Right ventricle myocardium inferior (tissue), 1 donor: ENCODE measurements at regions of chr3 and their contacts with region 1.

Region 1: DNA sequence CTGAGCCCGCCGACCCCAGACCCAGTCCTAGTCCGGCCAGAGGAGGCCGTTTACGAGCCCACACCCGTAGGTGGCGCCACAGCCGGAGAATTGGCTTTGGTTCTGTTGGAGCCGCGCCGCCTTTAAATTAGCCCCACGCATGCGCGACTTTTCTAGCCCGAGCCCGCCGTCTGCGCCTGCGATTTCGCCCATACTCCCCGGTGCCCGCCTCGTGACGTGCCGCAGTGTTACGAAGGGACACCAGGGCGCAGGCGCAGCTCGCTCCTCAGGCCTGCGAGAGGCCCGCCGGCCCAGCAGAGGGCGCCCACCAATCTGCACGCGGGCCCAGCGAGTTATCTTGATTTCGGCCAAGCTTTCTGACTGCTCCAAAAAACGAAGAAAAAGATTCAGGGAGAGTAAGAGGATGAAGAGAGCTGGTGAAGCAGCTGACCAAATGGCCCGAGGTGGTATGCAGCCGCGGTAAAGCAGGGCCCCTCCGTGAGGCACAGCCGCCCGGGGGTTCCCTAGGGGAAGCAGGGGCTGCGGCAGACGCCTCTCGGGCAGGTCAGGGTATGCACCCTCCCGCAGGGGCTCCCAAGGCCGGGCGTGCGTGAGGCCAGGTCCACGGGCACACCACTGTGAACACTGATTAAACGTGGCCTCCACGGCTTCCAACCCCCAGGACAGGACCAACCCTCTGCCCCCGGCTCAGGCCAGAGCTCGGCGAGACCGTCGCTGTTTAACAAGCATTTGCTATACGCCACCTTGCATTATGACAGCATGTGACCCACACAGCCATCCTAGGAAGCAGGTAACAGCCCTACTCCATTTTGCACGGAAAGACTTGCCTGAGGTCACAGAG is 32.8 kb downstream of the RPN1 start:
- DNase-seq: peak; percentile 100
- ATAC-seq: peak; percentile 98

Region 2: DNA sequence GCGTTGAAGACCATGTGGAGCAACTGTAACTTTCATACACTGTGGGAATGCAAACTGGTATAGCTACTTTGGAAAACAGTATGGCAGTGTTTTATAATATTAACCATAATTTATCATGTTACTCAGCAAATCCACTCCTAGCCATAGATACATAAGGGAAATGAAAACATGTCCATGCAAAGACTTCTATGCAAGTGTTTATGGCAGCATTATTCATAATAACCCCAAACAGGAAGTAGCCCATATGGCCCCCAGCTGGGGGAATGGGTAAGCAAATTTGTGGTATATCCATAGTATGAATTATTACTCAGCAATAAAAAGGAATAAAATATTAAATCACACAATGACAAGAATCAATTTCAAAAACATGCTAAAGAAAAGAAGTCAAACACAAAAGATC is 101.8 kb before region 1 on chr3:
- intact Hi-C with region 1: no loop called
- DNase-seq: no peak
- ATAC-seq: no peak

Region 3: DNA sequence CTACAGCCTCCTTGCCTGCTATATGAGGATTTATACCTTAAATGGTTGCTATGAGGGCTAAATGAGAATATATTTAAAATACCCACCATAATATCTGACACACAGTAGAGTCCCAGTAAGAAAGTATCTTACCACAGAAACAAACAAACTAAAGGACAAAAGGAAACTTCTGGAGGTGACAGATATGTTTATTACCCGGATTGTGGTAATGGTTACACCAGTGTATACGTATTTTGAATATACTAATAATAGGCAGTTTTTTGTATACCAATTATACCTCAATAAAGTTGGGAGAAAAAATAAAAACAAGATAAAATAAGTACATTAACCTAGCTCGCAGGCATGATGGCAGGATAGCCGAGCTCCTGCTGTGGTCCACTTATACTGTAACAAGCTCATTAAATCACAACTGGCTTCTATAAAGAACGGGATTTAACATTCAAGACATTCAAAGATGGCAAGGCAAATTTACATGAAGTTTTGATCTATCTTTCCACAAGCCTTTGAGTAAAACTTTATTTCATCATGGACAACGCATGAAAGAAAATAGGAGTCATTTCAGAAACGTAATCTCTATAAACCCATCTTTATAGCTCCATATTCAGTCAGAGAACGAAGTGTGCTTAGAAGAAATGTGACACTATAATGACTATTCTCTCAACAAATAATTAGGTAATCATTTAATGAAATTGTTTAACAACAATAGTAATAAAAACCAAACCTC is 31.3 kb after region 1 on chr3:
- intact Hi-C with region 1: loop called (anchors 2 kb)
- DNase-seq: no peak
- ATAC-seq: no peak

Region 4: DNA sequence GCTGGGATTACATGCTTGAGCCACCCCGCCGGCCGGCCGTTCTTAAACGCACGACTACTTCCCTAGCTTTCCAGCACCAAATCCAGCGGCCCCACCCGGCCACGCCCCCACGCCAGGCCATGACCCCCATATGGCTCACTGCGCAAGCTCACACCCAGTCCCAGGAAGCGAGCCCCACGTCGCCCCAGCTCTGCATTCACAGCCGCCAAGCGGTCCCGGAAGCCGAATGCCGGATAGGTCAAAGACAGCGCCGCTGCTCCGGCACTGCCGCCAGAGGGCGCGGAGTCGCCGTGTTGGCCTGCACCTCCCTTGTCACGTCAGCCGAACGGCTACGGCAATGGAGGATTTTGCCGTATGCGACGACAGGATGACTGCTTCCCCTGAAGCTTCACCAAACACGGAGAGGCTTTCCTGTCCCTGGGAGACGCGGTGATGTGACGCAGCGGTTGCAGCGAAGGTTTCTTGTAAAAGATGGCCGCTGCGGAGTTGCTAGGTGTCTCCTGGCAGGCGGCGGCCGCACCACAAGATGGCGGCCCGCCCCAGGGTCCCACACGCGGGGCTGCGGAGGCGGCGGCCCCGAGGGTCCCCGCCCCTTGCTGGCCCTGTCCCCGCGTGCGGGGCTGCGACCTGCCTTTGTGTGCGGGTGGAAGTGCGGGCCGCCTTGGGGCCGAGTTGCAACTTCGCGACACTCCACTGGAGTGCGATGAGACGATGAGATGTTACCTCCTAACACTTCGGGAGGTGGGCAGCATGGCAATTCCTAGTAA is 63.0 kb after region 1 on chr3:
- intact Hi-C with region 1: loop called (anchors 2 kb)
- DNase-seq: peak; percentile 100
- ATAC-seq: peak; percentile 100

Region 5: DNA sequence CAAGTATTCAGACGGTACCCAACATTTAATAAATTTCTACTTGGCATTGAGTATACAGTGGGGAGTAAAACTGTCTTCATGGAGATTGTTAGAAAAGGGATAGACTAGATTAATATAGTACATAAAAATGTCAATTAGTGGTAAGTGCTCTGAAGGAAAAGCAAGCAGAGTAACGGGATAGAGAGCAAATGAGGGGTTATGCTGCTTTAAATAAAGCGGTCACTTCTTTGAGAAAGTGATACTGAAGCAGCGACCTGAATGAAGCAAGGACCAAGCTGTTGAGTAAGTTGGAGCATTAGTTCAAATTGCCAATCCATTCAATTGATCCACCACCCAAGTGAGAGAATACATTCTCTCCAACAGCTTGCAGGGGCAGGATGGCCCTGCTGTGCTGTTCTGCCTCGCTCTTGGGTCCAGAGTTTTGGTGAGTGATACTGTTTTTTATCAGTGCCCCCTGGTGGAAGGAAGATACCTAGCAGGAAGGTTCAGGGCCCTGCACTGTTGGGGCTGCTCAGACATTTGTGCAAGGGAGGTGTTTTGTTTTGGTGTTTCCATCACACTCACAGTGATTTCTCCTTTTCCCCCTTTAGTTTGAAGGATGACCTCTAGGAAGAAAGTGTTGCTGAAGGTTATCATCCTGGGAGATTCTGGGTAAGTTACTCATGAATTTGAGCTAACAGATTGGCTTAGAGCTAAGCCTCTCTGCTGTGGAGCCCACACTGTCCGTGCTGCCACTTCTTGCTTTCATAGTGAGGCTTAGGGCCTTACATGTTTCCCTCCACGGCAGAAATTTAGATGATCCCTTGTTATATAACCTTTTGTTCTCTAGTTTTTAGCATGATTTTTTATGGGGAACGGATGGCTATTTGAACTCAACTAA is 177.2 kb after region 1 on chr3:
- intact Hi-C with region 1: loop called (anchors 2 kb)
- DNase-seq: no peak
- ATAC-seq: peak; percentile 89